GM13977 (cell line): ENCODE measurements at regions of chr9 and their contacts with region 1.

Region 1: GRCh38 chr9:37485389-37486219 is at the start of gene POLR1E:
- DNase-seq: peak; percentile 98
- CTCF ChIP-seq: no peak

Region 2: GRCh38 chr9:37229882-37230487 is 255.6 kb before region 1 on chr9:
- in situ Hi-C with region 1: no loop called
- DNase-seq: no peak
- CTCF ChIP-seq: no peak

Region 3: DNA sequence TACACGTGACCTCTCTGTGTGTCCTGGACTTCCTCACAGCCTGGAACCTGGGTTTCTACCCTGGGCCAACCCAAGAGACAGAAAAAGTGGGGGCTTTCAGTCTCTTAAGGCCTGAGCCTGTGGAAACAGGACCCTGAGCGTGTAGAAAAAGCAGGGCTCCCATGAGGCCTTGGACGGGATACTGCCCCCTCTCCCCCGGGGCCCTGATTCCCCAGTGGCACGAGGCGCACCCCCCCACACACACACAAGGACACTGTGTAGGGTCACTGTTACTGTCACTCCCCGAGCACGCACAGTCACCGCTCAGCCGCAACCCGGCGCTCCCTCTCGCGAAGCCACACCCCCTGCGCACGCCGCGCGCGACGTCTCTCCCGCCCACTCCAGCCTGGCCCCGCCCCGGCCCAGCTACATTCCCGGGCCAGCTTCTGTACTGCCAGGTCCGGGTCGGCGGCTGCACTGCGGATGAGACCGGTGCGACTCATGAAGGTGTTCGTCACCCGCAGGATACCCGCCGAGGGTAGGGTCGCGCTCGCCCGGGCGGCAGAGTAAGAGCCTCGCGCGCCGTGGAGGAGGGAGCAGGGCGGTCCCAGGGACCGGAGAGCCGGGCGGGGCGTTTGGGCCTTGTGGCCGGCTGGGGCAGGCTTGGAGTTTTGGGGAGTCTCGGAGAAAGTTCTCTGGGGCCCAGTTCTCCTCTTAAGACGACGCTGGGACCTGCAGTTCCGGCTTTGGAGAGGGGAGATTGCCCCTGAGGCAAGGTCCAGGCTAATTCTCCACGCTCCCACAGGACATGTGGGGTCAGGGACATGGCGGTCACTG is 63.1 kb before region 1 on chr9 and contains the start of gene GRHPR:
- in situ Hi-C with region 1: no loop called
- DNase-seq: peak; percentile 94
- CTCF ChIP-seq: no peak

Region 4: GRCh38 chr9:37592108-37592951 is 106.7 kb after region 1 on chr9 and contains the start of gene TOMM5:
- in situ Hi-C with region 1: loop called (anchors 25 kb)
- DNase-seq: peak; percentile 85
- CTCF ChIP-seq: no peak

Region 5: GRCh38 chr9:37859043-37859442 is 373.4 kb after region 1 on chr9:
- in situ Hi-C with region 1: loop called (anchors 25 kb)
- DNase-seq: no peak
- CTCF ChIP-seq: no peak